Right ventricle myocardium superior (tissue), 1 donor: ENCODE measurements at regions of chr16 and their contacts with region 1.

Region 1: GRCh38 chr16:13957197-13958078 is 37.5 kb downstream of the ERCC4 start:
- DNase-seq: peak; percentile 78
- ATAC-seq: peak; percentile 95

Region 2: GRCh38 chr16:12449795-12450194 is 1507.6 kb before region 1 on chr16:
- intact Hi-C with region 1: no loop called
- DNase-seq: no peak
- ATAC-seq: no peak

Region 3: DNA sequence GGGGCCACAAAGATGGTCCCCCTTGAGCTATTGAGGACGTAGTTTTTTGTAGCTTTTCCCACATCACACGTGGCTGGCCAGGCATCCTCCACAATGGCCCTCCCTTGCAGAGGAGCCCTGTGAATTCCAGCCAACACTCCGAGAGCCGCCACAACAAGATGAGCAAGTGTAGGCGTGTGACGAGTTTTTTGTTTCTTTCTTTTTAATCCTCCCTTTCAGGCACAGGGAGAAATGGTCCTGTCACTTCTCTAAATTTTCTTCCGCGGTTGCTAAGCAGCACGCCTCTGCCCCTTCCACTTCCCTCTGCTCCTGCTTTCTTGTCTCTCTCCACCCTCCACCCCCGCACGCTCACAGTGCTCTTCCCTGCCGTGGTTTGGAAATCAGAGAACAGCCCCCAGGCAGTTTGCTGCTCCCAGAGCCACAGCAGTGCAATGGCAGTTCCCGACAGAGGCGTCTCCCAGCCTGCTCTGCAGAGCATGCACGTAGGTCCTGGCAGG is 45.7 kb after region 1 on chr16:
- intact Hi-C with region 1: loop called (anchors 10 kb)
- DNase-seq: peak; percentile 74
- ATAC-seq: peak; percentile 51

Region 4: GRCh38 chr16:14015948-14016347 is 58.5 kb after region 1 on chr16:
- intact Hi-C with region 1: no loop called
- DNase-seq: no peak
- ATAC-seq: peak; percentile 45

Region 5: GRCh38 chr16:14070877-14071575 is 113.6 kb after region 1 on chr16 and contains the start of gene MRTFB:
- intact Hi-C with region 1: no loop called
- DNase-seq: peak; percentile 89
- ATAC-seq: peak; percentile 95
- total RNA-seq, gene MRTFB: 22.1 TPM